GM12878 (cell line): ENCODE measurements at regions of chr2 and their contacts with region 1.

Region 1: DNA sequence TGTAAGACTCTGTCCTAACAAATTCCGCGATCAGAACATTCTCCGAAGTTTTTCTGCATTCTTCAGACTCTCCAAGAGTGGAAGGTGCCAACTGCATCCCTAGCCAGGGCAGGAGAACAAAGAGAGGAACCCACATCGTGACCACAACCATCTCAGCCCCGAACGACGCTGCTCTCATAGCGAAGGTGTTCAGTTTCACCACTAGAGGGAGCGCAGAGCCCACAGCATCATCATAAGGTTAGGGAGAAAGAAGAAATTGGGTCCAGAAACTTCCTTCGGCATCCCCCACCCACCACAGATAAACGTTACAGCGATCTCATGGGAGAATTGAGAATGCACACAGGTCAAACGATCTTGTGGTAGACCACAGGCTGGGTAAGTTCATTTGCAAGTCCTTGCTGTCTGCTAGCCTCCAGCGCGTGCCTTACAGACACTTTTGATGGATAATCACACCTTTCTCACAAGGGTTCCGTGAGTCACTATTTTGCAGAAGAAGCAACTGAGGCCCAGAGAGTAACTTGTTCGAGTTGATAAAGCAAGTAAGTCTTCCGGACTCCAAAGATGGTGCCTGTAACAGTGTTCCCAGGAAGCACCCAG is 53.7 kb upstream of the ARL4C start:
- DNase-seq: peak; percentile 13
- ATAC-seq: peak; percentile 93
- H3K4me3 ChIP-seq: no peak overlapping the region
- H3K27ac ChIP-seq: no peak overlapping the region
- H3K4me1 ChIP-seq: no peaks in the 10 kb centered on the region
- H3K27me3 ChIP-seq: no peaks in the 10 kb centered on the region
- CTCF ChIP-seq: peak; percentile 92 to 94 (median 92)
- EP300 ChIP-seq: no peak
- POLR2A ChIP-seq: no peak
- RAD21 ChIP-seq: peak; percentile 91

Region 2: DNA sequence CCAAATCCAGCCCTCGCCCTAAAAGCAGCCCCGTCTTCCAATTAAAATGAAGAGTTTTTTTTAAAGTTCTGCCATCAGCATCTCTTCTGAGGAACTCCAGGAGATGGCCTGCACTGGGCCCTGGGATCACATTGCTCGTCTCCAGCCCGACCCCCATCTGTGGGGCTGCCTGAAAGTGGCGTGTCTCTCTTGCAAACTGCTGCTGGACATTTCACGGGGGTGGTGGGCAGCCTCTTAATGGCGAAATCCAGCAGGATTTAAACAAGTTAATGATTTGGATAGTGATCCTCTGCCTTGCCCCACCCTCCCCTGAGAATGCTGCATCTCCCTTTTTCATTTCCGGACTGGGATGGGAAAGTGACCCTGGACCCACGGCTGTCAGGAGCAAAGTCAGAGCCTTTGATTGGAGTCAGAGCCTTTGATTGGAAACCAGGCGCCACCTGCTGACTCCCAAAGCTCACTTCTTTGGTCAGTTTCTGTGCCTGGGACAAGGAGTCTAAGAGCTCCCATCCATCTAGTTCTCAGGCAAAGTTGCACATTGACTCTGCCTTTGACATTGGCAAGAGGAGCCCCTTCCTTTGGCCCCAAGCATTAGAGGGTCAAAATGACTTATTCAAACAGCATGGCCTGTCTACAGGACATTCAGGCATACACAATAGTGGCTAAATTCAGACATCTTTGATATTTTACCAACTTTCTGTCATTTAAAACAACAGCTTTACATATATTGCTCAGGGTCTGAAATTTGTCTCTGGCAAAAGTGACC is 556.4 kb after region 1 on chr2:
- CTCF ChIA-PET with region 1: interaction called, 8 read pairs
- POLR2A ChIA-PET with region 1: no interaction called
- RAD21 ChIA-PET with region 1: no interaction called
- SMC1A ChIA-PET with region 1: no interaction called
- in situ Hi-C with region 1: loop called (anchors 5 kb)
- intact Hi-C with region 1: loop called (anchors 2 kb)
- DNase-seq: no peak
- ATAC-seq: no peak
- H3K4me3 ChIP-seq: no peak overlapping the region
- H3K27ac ChIP-seq: no peak overlapping the region
- H3K4me1 ChIP-seq: no peaks in the 10 kb centered on the region
- H3K27me3 ChIP-seq: no peaks in the 10 kb centered on the region
- CTCF ChIP-seq: peak; percentile 33 to 38 (median 34); a peak in 4 of 6 replicates
- EP300 ChIP-seq: no peak
- POLR2A ChIP-seq: no peak
- RAD21 ChIP-seq: peak; percentile 39

Region 3: DNA sequence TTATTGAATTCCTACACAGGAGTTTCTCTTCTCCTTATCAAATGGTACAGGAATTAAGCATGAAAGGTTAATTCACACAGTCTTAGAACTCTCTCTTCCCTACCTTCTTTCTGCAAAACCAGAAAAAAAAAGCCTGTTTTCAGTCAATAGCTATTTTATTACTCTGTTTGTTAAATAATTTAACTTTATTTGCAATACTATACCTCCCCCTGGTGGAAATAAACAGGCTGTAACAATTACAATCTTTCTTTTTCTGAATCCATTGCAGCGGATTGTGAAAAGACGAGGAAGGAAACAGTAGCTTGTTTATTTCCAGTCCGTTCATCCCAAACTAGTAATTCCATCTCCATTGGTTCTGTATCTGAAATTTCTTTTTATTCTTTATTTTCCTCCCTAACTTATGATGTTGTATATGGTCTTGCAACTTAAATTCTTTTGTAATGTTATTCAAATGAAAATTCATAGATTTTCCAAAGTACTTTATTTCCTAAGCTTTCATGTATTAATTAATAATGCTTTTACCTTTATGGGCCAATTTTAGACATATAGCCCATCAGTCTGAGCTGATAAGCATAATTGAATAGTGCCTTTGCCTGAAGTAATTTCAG is 566.4 kb after region 1 on chr2:
- CTCF ChIA-PET with region 1: interaction called, 11 read pairs
- POLR2A ChIA-PET with region 1: no interaction called
- RAD21 ChIA-PET with region 1: interaction called, 7 read pairs
- SMC1A ChIA-PET with region 1: interaction called, 5 read pairs
- in situ Hi-C with region 1: loop called (anchors 5 kb)
- intact Hi-C with region 1: loop called (anchors 1 kb)
- DNase-seq: no peak
- ATAC-seq: no peak
- H3K4me3 ChIP-seq: no peak overlapping the region
- H3K27ac ChIP-seq: no peak overlapping the region
- H3K4me1 ChIP-seq: no peaks in the 10 kb centered on the region
- H3K27me3 ChIP-seq: no peaks in the 10 kb centered on the region
- CTCF ChIP-seq: peak; percentile 32 to 45 (median 40); a peak in 4 of 6 replicates
- EP300 ChIP-seq: no peak
- POLR2A ChIP-seq: no peak
- RAD21 ChIP-seq: peak; percentile 57

Region 4: GRCh38 chr2:235595422-235596010 is 1044.9 kb after region 1 on chr2:
- CTCF ChIA-PET with region 1: interaction called, 3 read pairs
- POLR2A ChIA-PET with region 1: no interaction called
- RAD21 ChIA-PET with region 1: interaction called, 4 read pairs
- SMC1A ChIA-PET with region 1: no interaction called
- in situ Hi-C with region 1: loop called (anchors 5 kb)
- intact Hi-C with region 1: loop called (anchors 1 kb)
- DNase-seq: no peak
- ATAC-seq: peak; percentile 76
- H3K4me3 ChIP-seq: no peak overlapping the region
- H3K27ac ChIP-seq: no peak overlapping the region
- H3K4me1 ChIP-seq: no peaks in the 10 kb centered on the region
- H3K27me3 ChIP-seq: no peaks in the 10 kb centered on the region
- CTCF ChIP-seq: peak; percentile 74 to 82 (median 81)
- EP300 ChIP-seq: no peak
- POLR2A ChIP-seq: no peak
- RAD21 ChIP-seq: peak; percentile 56

Region 5: GRCh38 chr2:235746257-235747084 is 1195.9 kb after region 1 on chr2:
- CTCF ChIA-PET with region 1: interaction called, 5 read pairs
- POLR2A ChIA-PET with region 1: no interaction called
- RAD21 ChIA-PET with region 1: no interaction called
- SMC1A ChIA-PET with region 1: no interaction called
- in situ Hi-C with region 1: loop called (anchors 10 kb)
- intact Hi-C with region 1: loop called (anchors 5 kb)
- DNase-seq: no peak
- ATAC-seq: peak; percentile 97
- H3K4me3 ChIP-seq: no peak overlapping the region
- H3K27ac ChIP-seq: no peak overlapping the region
- H3K4me1 ChIP-seq: no peaks in the 10 kb centered on the region
- H3K27me3 ChIP-seq: peaks cover 0 to 1% of the 10 kb centered on the region in 2 experiments; a peak in 2 of 4 replicates
- CTCF ChIP-seq: peak; percentile 81 to 86 (median 81)
- EP300 ChIP-seq: no peak
- POLR2A ChIP-seq: no peak
- RAD21 ChIP-seq: peak; percentile 84